ENCODE measurements at regions of chr11 and their contacts with region 1.

Region 1: DNA sequence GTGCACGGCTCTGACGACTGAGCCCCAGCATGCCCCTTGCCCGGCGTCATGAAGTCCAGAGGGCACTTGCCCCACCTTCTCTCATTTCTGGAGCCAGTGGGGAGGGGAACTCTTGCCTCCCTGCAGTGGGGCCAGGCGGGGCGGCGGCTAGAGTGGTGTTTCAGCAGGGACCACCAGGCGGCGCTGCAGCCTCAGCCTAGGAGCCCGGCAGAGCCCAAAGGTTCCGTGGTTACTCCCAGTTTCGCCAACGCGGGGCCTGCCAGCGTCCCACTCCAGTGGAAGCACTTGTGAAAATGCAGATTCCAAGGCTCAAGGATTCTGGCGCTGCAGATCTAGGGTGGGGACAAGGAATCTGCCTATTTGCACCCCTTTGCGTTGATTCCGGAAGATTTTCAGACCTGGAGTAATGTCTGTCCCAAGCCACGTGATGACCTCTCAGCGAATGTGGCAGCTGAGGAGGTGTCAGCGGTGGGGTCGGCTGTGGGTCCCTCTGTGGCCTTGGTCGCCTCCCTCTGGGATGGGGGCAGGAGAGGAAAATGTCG is 55.7 kb downstream of the CD82 start:
- DNase-seq: peak; percentile 64 to 86
- H3K4me3 ChIP-seq: no peak overlapping the region
- H3K27ac ChIP-seq: no peak overlapping the region
- H3K4me1 ChIP-seq: no peaks in the 10 kb centered on the region
- H3K27me3 ChIP-seq: no peaks in the 10 kb centered on the region
- CTCF ChIP-seq: peak; percentile 94 to 97 (median 95)
- POLR2A ChIP-seq: no peak

Region 2: DNA sequence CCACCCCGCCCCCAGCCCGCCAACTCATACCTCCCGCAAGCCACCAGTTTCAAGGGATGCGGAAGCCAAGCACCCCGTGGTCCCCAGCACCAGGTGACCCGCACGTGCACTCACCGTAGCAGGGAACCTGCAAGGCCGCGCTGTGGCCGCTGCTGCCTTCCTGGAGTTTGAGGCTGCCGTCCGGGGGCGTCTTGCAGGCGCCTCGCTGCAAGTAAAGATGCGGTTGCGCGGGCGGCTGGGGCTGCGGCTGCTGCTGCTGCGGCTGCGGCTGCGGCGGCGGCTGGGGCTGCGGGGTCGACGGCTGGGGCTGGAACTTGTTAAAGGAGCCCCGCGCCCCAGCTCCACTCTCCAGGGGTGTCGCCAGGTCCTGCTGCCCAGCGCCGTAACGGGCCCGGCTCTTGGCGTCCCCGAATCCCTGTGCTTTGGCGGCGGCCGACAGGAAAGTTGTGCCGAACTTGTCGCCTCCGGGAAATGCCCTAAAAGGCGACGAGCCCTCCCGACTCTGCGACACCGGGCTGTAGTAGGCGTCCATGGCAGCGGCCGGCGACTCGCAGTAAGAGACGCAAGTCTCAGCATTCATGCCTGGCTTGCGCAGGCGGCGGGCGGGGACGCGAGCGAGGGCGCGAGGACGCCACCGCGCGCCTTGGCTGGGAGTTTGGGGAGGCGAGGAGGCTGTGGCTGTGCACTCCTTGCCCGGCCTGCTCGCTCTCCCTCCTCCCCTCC is 311.6 kb before region 1 on chr11 and contains the start of gene ALX4:
- intact Hi-C with region 1: no loop called
- DNase-seq: no peak
- H3K4me3 ChIP-seq: peak within 1 kb of the TSS; percentile 22 to 30
- H3K27ac ChIP-seq: no peak within 1 kb of the TSS
- H3K4me1 ChIP-seq: peaks cover 35% of the 10 kb centered on the region
- H3K27me3 ChIP-seq: peaks cover 13% of the 10 kb centered on the region
- CTCF ChIP-seq: no peak
- POLR2A ChIP-seq: no peak
- total RNA-seq, gene ALX4: not detected

Region 3: GRCh38 chr11:44556735-44557409 is 64.3 kb before region 1 on chr11:
- intact Hi-C with region 1: loop called (anchors 2 kb)
- DNase-seq: no peak
- H3K4me3 ChIP-seq: no peak overlapping the region
- H3K27ac ChIP-seq: no peak overlapping the region
- H3K4me1 ChIP-seq: peaks cover under 1% of the 10 kb centered on the region
- H3K27me3 ChIP-seq: no peaks in the 10 kb centered on the region
- CTCF ChIP-seq: peak; percentile 82 to 91 (median 87)
- POLR2A ChIP-seq: no peak

Region 4: DNA sequence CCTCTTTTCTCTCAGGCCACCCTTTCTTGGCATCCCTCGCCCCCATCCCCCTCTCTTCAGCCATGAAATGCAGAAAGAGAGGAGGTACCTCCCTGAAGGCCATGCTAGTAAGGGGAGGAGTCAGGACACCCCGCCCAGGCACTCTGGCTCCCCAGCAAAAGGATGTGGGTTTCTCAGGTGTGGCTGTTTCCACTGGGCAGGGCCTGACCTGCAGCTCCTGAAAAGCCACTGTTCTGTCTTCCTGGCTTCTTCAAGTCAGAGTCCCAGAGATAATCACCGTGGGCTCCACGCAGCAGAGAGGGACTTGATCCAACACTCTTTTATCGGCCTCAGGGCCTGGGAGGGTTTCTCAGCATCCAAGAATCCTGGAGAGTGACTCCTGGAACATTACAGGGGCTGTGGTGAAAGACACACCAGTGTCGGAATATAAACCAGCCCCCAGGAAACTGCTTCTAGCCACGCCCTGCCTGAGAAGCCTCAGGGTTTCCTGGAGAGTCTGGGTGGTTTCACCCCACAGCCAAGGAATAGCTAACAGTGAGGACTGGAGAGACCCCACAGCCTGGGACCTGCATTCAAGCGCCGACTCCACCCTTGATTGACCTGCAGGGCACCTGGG is 59.9 kb after region 1 on chr11:
- intact Hi-C with region 1: no loop called
- DNase-seq: no peak
- H3K4me3 ChIP-seq: no peak overlapping the region
- H3K27ac ChIP-seq: no peak overlapping the region
- H3K4me1 ChIP-seq: no peaks in the 10 kb centered on the region
- H3K27me3 ChIP-seq: no peaks in the 10 kb centered on the region
- CTCF ChIP-seq: no peak
- POLR2A ChIP-seq: no peak

Region 5: GRCh38 chr11:44727373-44728287 is 106.4 kb after region 1 on chr11:
- intact Hi-C with region 1: loop called (anchors 10 kb)
- DNase-seq: no peak
- H3K4me3 ChIP-seq: peak overlapping the region; percentile 52 to 54
- H3K27ac ChIP-seq: peak overlapping the region; percentile 74
- H3K4me1 ChIP-seq: peaks cover 36% of the 10 kb centered on the region
- H3K27me3 ChIP-seq: no peaks in the 10 kb centered on the region
- CTCF ChIP-seq: peak; percentile 52 to 99 (median 80)
- POLR2A ChIP-seq: no peak

Region 6: DNA sequence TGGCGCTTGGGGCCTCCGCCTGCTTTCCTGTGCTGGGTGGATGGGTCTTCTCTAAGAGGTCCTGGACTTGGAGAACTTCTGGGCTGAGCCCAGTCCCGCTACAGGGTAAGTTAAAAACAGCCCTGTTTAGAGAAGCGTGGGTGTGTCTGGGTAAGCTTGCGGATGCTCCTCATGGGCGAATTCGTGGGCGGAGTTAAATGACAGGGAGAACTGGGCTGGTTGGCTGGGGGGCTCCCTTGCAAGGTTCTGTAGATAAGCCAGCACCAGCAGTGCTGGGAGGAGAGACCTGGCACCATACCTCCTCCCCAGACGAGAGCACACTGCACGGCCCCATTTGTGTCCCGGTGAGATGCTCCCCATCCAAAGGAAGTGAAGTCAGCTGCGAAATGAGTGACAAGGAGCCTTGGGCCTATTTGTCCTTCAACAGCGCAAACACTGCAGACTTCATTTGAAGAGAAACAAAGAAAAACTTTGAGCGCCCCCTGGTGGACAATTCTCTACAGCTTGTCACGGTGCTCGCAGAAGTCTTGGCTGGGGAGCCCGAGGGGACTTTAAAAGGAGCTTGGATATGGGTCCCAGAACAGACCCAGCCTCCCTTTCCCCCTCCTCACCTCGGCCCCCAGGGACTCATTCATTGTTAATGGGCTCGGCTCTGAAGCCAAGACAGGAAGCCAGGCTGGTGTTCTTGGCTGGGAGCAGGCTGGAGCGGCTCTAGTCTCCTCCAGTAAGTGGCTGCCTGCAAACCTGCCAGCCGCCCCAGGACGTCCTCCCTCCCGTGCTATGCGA is 290.0 kb after region 1 on chr11:
- intact Hi-C with region 1: loop called (anchors 2 kb)
- DNase-seq: no peak
- H3K4me3 ChIP-seq: no peak overlapping the region
- H3K27ac ChIP-seq: no peak overlapping the region
- H3K4me1 ChIP-seq: no peaks in the 10 kb centered on the region
- H3K27me3 ChIP-seq: no peaks in the 10 kb centered on the region
- CTCF ChIP-seq: peak; percentile 87 to 96 (median 90)
- POLR2A ChIP-seq: no peak

Measured in vagina (tissue), 2 donors.